ENCODE measurements at regions of chr1 and their contacts with region 1.

Region 1: DNA sequence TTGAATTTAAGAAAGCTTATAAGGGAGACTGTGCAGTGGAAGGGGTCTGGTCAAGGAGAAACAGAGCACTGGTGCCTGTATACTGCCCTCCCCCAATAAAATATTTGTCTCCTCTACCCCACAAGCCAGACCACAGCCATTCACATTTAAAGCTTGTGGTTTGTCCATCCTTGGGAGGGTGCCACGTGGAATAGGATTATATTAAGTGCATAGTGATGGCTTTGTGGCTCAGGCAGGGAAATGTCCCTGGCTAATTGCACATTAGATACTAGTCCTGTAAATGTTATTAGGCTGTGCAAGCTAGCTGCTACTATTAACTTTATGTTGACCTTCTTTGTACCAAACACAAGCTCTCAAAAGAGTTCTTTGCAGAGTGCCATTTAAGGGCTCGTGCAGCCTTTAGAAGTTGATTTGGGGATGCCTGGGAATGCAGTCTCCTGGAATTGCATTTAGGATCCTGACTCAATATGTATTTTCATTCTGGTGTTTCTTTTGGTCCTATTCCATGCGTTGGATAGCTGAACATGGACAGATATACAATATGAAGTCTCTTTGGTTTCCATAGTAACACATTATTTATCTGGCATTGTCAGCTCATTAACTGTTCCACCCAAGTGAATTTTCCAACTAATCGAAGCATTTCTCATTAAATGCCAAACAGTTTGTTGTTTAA is 210.6 kb downstream of the ROR1 start:
- DNase-seq: no peak
- H3K4me3 Mint-ChIP-seq: peak overlapping the region; percentile 13
- H3K27ac Mint-ChIP-seq: peak overlapping the region; percentile 43
- H3K4me1 Mint-ChIP-seq: peaks cover 77% of the 10 kb centered on the region
- H3K27me3 Mint-ChIP-seq: no peaks in the 10 kb centered on the region
- CTCF ChIP-seq: no peak

Region 2: DNA sequence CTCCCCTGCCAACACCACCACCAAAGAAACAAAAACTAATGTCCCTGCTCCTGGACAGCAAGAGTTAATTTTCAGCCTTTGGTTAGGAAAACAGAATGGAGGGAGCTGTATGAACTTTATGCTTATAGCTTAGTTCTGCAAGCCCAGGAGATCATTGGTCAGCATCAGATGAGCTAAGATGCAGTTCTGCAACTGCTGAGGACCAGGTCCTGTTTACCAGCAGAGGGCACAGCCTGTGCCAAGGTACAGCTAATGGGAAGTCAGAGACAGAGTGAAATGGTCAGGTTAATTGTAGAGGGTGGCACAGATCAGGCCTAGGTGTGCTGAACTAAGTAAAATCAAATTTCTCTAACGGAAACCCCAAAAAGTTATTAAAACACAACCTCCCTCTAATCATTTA is 49.2 kb before region 1 on chr1:
- CTCF ChIA-PET with region 1: interaction called, 6 read pairs
- intact Hi-C with region 1: loop called (anchors 5 kb)
- DNase-seq: peak; percentile 53
- H3K4me3 Mint-ChIP-seq: no peak overlapping the region
- H3K27ac Mint-ChIP-seq: peak overlapping the region; percentile 30
- H3K4me1 Mint-ChIP-seq: peaks cover 51% of the 10 kb centered on the region
- H3K27me3 Mint-ChIP-seq: no peaks in the 10 kb centered on the region
- CTCF ChIP-seq: peak; percentile 39

Region 3: DNA sequence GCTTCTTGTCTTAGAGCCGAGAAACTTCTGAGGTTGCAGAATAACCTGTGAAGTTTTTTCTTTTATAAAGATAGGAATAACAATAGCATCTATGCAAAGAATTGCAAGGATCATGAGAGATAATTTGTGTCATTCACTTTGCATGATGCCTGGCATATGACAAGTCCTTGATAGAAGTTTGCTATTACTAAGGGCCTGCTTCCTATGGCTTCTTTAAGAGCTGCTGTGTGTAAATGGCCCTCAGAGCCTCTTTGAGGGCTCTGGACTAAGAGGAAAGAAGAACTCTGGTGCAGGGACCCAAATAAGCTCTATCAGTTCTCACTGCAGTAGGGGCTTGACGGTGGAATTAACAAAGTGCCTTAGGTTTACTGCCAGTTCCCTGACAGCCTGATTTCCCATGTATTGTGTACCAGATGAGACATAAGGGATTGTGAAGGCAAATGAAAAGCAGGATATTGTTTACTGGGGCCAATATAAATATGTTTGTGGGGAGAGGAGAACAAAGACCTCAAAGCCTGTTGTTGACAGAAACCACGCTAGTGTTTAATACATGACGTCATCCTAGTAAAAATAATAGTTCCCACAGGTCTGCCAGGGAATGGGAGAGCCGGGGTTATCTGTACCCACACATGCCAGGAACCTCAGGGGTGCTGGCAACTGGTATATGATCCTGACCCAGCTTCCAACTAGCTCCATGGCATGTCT is 87.8 kb after region 1 on chr1:
- CTCF ChIA-PET with region 1: no interaction called
- intact Hi-C with region 1: no loop called
- DNase-seq: no peak
- H3K4me3 Mint-ChIP-seq: no peak overlapping the region
- H3K27ac Mint-ChIP-seq: no peak overlapping the region
- H3K4me1 Mint-ChIP-seq: peaks cover 16% of the 10 kb centered on the region
- H3K27me3 Mint-ChIP-seq: no peaks in the 10 kb centered on the region
- CTCF ChIP-seq: no peak

Region 4: GRCh38 chr1:64082459-64082858 is 98.1 kb after region 1 on chr1:
- CTCF ChIA-PET with region 1: no interaction called
- intact Hi-C with region 1: no loop called
- DNase-seq: no peak
- H3K4me3 Mint-ChIP-seq: no peak overlapping the region
- H3K27ac Mint-ChIP-seq: no peak overlapping the region
- H3K4me1 Mint-ChIP-seq: no peaks in the 10 kb centered on the region
- H3K27me3 Mint-ChIP-seq: no peaks in the 10 kb centered on the region
- CTCF ChIP-seq: no peak